ENCODE measurements at regions of chr6 and their contacts with region 1.

Region 1: GRCh38 chr6:35209081-35209480 is 4.7 kb upstream of the SCUBE3 start:
- DNase-seq: no peak
- CTCF ChIP-seq: no peak

Region 2: GRCh38 chr6:35120746-35121145 is 88.3 kb before region 1 on chr6:
- CTCF ChIA-PET with region 1: no interaction called
- POLR2A ChIA-PET with region 1: no interaction called
- DNase-seq: no peak
- CTCF ChIP-seq: no peak

Region 3: GRCh38 chr6:35146453-35146852 is 62.6 kb before region 1 on chr6:
- CTCF ChIA-PET with region 1: interaction called, 44 read pairs
- POLR2A ChIA-PET with region 1: no interaction called
- DNase-seq: no peak
- CTCF ChIP-seq: peak; percentile 34

Region 4: DNA sequence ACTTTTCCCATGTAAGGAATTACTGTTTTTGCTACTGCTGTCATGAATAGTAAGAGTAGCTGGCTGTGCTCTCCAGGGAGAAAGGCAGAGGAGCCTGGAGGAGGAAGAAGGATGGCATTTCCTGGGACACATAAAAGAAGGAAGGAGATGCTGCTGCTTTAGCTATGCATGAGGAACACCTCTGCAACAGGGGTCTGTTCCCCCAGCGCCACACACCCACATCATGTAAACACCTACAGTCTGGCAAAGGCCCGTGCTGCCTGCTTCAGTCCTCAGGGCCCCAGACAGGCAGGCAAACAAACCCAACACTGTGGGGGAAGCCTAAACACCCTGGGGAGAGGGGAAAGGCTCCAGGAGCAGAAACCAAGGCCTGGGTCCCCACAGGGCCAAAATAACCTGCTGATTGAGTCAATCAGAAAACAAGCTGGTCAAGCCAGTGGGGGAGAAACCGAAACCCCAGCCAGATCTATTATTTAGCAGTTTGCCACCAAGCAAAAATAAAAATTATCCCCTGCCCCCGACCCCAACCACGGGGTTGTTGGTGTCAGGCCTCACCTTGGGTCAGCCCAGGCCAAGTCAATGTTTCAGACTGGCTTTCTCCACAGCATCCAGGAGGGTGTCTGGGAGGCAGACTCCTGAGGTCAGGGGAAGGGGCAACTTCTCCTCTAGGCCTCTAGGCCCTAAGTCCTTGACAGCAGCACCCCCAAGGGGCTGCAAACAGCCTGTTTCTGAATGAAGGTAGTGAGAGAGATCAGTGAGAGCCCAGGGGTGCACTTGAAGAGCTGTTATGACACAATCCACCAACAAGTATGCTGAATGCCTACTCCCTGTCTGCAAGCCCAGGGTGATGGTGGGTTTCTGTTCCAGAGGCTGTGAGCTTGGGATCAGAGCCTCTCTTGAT is 29.9 kb before region 1 on chr6:
- CTCF ChIA-PET with region 1: interaction called, 10 read pairs
- POLR2A ChIA-PET with region 1: no interaction called
- DNase-seq: no peak
- CTCF ChIP-seq: no peak

Region 5: GRCh38 chr6:35185302-35185681 is 23.8 kb before region 1 on chr6:
- CTCF ChIA-PET with region 1: interaction called, 48 read pairs
- POLR2A ChIA-PET with region 1: no interaction called
- DNase-seq: no peak
- CTCF ChIP-seq: no peak